WTC11 (cell line): ENCODE measurements at regions of chr20 and their contacts with region 1.

Region 1: GRCh38 chr20:48620519-48621254 is 207.1 kb downstream of the PREX1 start:
- DNase-seq: peak; percentile 97
- ATAC-seq: peak; percentile 90
- H3K4me3 Mint-ChIP-seq: peak overlapping the region; percentile 73
- H3K27ac Mint-ChIP-seq: peak overlapping the region; percentile 50
- H3K4me1 Mint-ChIP-seq: peaks cover 8% of the 10 kb centered on the region; the same call in 1 of the 2 replicates
- H3K27me3 Mint-ChIP-seq: no peaks in the 10 kb centered on the region; the same call in 1 of the 2 replicates
- CTCF ChIP-seq: peak; percentile 84

Region 2: GRCh38 chr20:47677635-47678453 is 942.8 kb before region 1 on chr20:
- CTCF ChIA-PET with region 1: interaction called, 15 read pairs
- POLR2A ChIA-PET with region 1: no interaction called
- DNase-seq: peak; percentile 85
- ATAC-seq: peak; percentile 76
- H3K4me3 Mint-ChIP-seq: no peak overlapping the region
- H3K27ac Mint-ChIP-seq: no peak overlapping the region
- H3K4me1 Mint-ChIP-seq: peaks cover 13% of the 10 kb centered on the region
- H3K27me3 Mint-ChIP-seq: no peaks in the 10 kb centered on the region
- CTCF ChIP-seq: peak; percentile 89

Region 3: GRCh38 chr20:48295445-48295963 is 325.2 kb before region 1 on chr20:
- CTCF ChIA-PET with region 1: interaction called, 34 read pairs
- POLR2A ChIA-PET with region 1: no interaction called
- DNase-seq: no peak
- ATAC-seq: peak; percentile 79
- H3K4me3 Mint-ChIP-seq: no peak overlapping the region
- H3K27ac Mint-ChIP-seq: peak overlapping the region; percentile 89
- H3K4me1 Mint-ChIP-seq: peaks cover 56% of the 10 kb centered on the region
- H3K27me3 Mint-ChIP-seq: no peaks in the 10 kb centered on the region
- CTCF ChIP-seq: no peak

Region 4: DNA sequence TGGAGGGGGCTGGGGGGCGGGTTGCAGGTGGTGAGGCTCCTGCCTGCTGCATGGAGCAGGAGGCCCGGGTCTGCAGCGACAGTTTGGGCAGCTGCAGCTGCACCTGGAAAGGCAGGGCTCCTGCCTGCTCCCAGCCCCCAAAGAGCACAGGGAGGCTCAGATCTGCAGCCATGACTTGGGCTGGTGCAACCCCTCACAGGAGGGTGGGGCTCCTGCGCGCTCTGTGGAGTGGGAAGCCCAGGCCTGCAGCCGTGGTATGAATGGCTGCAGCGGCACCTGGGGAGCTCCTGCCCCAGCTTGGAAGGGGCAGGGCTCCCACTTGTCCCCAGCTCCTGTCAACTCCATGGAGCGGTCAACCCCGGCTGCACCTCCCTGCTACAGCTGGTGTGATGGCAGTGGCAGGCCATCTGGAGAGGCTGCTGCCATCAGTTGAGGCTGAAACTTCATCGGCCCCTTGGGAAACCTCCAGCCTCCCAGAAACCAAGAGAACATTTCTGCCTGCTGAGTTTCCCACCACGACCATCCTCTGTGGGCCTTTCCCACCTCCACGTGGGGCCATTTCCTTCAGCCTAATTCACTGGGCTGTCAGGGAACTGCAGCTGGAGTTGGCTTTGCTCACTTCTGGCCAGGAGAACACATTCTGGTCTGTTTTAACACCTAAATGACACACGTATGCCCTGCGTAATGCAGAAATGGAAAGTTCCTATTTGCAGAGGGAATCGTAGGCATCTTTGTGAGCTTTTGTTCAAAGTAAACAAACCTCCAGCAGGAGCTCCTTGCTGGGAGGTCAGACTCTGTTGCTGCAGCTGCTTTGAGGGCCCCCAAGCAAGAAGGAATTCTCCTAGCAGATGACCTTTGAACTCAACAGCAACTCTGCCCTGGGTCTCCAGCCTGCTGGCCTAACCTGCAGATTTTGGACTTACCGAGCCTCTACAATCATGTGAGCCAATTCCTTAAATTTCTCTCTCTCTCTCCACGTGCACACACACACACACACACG is 221.9 kb before region 1 on chr20:
- CTCF ChIA-PET with region 1: interaction called, 23 read pairs
- POLR2A ChIA-PET with region 1: no interaction called
- DNase-seq: no peak
- ATAC-seq: no peak; the same call in 1 of the 2 replicates
- H3K4me3 Mint-ChIP-seq: no peak overlapping the region
- H3K27ac Mint-ChIP-seq: no peak overlapping the region
- H3K4me1 Mint-ChIP-seq: peaks cover 16% of the 10 kb centered on the region
- H3K27me3 Mint-ChIP-seq: no peaks in the 10 kb centered on the region; the same call in 1 of the 2 replicates
- CTCF ChIP-seq: no peak

Region 5: DNA sequence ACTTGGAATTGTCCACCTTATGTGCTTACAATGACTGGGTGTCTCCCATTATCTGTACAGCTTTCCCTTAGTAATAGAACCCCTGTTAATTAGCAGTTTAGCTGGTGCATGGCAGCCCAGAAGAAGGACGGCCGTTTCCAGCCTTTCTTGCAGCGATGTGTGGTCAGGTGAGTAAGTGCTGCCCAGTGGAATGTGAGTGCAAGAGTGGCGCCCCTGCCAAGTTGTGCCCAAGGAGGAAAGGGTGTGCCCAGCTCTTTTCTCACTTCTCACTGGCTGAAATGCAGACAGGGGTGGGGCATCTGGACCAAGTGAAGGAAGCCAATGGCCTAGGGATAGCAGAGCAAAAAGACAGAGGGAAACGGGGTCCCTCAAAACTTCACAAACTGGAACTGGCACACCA is 89.7 kb before region 1 on chr20:
- CTCF ChIA-PET with region 1: interaction called, 13 read pairs
- POLR2A ChIA-PET with region 1: no interaction called
- DNase-seq: no peak
- ATAC-seq: no peak
- H3K4me3 Mint-ChIP-seq: no peak overlapping the region
- H3K27ac Mint-ChIP-seq: no peak overlapping the region
- H3K4me1 Mint-ChIP-seq: no peaks in the 10 kb centered on the region
- H3K27me3 Mint-ChIP-seq: no peaks in the 10 kb centered on the region
- CTCF ChIP-seq: no peak

Region 6: DNA sequence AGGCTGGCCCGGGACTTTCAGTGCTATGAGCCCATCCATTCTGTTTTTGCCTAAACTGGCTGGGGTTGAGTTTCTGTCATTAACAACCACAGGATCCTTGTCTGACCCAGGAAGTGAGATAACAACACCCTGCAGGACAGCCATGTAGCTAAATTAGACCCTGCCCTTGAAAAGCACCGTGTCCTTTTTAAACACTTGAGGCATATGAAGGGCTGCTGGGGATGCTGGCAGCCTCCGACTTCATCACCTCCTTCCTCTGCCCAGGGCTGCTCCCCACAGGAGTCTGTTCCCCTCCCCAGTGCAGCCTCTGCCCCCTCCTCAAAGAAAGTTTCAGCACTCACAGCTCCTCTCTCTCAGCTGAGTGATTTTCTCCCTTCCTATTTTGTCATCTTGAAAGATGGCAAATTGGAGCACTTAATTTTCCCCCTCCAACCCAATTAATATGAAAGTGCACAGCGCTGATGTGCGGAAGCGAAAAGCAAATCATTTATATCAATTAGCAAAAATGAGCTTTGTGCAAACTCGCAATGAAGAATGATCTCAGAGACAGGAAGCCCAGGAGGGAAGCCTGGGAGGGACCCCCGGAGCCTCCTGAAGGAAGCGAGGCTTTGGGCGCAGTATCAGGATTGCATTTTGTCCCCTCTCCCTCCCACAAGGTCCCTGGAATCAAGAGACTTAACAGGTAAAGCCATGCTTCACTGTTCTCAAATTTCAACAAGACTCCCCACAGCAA is 38.6 kb before region 1 on chr20:
- CTCF ChIA-PET with region 1: interaction called, 11 read pairs
- POLR2A ChIA-PET with region 1: no interaction called
- DNase-seq: no peak
- ATAC-seq: no peak
- H3K4me3 Mint-ChIP-seq: no peak overlapping the region
- H3K27ac Mint-ChIP-seq: no peak overlapping the region
- H3K4me1 Mint-ChIP-seq: peaks cover 8% of the 10 kb centered on the region
- H3K27me3 Mint-ChIP-seq: no peaks in the 10 kb centered on the region; the same call in none of the 2 replicates
- CTCF ChIP-seq: no peak